Activated T-helper 1 cell treated with anti-CD3 and anti-CD28 coated beads, Interleukin-12 subunit alpha, Interleukin-12 subunit beta, Interleukin-2, Interleukin-4 antibody, amounts not matched to agents 30 ng/mL and 10 ng/mL and 1 ng/mL, durations not matched to agents 14 hours and 24 hours and 36 hours (primary cell): ENCODE measurements at regions of chr2 and their contacts with region 1.

Region 1: DNA sequence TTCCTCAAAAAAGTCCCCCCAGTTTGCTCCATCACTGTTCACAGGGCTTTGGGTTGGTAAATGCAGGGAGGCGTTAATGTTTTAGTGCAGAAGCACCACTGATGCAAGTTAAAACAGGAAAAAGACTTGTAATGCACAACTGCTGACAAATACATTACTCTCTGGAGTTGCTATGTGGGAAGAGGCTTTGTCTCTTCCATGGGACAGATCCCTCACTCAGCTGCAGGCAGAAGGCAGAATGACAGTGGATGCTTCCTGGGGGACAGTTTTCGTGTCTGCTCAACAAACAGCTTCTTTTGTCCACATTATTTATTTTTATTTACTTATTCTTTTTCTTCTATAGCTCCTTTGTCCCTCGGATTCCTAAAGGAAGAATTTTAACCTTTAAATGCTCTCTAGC is 22.7 kb upstream of the KCNE4 start:
- DNase-seq: no peak
- H3K4me3 Mint-ChIP-seq: no peak overlapping the region
- H3K27ac Mint-ChIP-seq: no peak overlapping the region
- H3K4me1 Mint-ChIP-seq: no peaks in the 10 kb centered on the region
- H3K27me3 Mint-ChIP-seq: peaks cover 3% of the 10 kb centered on the region

Region 2: DNA sequence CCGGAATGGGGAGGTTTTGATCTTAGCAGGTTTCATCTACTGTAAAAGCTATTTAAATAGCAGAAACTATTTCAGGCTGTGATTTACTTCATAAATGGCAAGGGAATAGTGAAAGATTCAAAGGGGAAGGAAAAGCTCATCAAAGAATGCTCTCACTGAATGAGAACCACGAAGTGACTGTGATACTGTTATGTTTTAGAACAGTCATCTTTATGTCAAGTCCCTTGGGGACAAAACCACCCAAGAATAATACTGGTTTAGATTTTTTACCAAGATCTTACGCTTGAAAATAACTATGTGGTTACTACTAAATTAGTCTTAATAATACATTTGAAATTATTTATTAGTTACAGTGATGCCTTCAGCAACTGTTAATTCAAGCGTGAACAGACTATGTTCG is 401.5 kb before region 1 on chr2:
- intact Hi-C with region 1: no loop called
- DNase-seq: no peak
- H3K4me3 Mint-ChIP-seq: no peak overlapping the region
- H3K27ac Mint-ChIP-seq: no peak overlapping the region
- H3K4me1 Mint-ChIP-seq: peaks cover 6% of the 10 kb centered on the region
- H3K27me3 Mint-ChIP-seq: no peaks in the 10 kb centered on the region

Region 3: DNA sequence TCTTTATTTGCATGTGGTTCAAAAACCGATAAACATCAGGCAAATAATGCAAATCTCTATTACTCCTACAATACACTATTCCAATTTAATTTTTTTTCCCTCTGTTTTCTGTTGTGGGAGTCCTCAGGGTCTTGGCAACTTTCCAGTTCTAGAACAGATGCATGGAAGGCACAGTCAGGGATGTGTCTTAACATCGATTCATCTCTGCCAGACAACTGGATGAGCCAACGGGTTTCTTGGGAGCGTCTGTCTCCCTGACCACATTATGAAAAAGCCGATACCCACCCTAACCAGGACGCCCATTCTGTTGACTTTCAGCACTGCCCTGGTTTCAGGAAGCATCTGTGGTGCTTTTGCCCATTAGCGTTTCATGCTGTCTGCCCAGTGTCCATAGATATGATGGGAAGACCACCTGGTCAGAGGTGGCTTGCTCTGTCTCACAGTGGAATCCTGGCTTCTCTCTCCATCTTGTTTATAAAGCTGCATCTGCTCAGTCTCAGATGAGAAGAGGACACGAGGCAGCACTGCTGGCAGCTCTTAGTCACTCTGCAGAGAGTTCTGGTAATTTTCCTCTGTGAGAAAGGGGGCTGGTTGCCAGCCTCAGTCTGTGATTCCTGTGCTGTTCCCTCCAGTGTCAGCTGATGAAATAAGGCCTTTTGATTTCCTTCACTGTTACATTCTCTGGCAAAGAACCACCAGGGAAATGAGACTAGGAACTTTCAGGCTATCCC is 35.2 kb before region 1 on chr2:
- intact Hi-C with region 1: loop called (anchors 1 kb)
- DNase-seq: no peak
- H3K4me3 Mint-ChIP-seq: no peak overlapping the region
- H3K27ac Mint-ChIP-seq: no peak overlapping the region
- H3K4me1 Mint-ChIP-seq: no peaks in the 10 kb centered on the region
- H3K27me3 Mint-ChIP-seq: peaks cover 2% of the 10 kb centered on the region